GM12878 (cell line): ENCODE measurements at regions of chr12 and their contacts with region 1.

Region 1: DNA sequence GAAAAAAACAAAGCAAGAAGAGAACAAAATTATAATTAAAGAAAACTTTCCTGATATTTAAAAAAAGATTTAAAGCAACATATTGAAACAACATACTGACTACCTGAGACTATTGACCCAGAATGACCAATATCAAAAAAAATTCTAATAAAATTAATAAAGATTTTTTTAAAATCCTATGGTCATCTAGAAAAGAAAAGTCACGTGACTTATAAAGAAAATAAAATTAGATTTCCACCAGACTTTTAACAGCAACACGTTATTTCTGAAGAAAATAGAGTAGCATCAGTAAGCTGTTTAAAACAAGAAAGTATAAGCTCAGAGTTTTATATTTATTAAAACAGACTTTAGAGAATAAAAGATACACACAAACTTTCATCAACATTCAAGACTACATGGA is 238.0 kb downstream of the C12orf42 start:
- DNase-seq: no peak
- ATAC-seq: no peak
- H3K4me3 ChIP-seq: no peak overlapping the region
- H3K27ac ChIP-seq: no peak overlapping the region
- H3K4me1 ChIP-seq: no peaks in the 10 kb centered on the region
- H3K27me3 ChIP-seq: no peaks in the 10 kb centered on the region
- CTCF ChIP-seq: no peak
- EP300 ChIP-seq: no peak
- POLR2A ChIP-seq: no peak
- RAD21 ChIP-seq: no peak

Region 2: GRCh38 chr12:102691773-102692555 is 565.8 kb before region 1 on chr12:
- CTCF ChIA-PET with region 1: no interaction called
- POLR2A ChIA-PET with region 1: interaction called, 10 read pairs
- RAD21 ChIA-PET with region 1: no interaction called
- SMC1A ChIA-PET with region 1: no interaction called
- in situ Hi-C with region 1: no loop called
- intact Hi-C with region 1: no loop called
- DNase-seq: no peak
- ATAC-seq: no peak
- H3K4me3 ChIP-seq: no peak overlapping the region
- H3K27ac ChIP-seq: no peak overlapping the region
- H3K4me1 ChIP-seq: no peaks in the 10 kb centered on the region
- H3K27me3 ChIP-seq: no peaks in the 10 kb centered on the region
- CTCF ChIP-seq: no peak
- EP300 ChIP-seq: no peak
- POLR2A ChIP-seq: no peak
- RAD21 ChIP-seq: no peak

Region 3: DNA sequence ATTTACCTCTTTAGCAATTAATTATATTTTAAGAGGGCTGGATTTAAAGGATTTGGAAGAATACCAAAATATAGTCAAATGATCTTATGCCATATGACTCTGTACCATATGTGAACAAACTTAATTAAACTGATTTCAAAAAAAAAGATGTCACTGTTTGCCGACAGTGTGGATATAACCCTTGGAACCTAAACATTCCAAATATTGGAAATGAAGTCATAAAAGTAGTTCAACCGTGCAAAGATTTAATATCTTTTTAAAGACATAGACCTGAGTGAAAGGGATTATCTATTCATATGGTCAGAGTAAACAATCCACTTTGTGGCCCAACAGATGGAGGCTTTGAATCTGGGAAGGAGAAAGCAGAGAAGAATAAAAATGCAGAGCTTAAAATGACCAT is 11.4 kb before region 1 on chr12:
- CTCF ChIA-PET with region 1: interaction called, 3 read pairs
- POLR2A ChIA-PET with region 1: no interaction called
- RAD21 ChIA-PET with region 1: no interaction called
- SMC1A ChIA-PET with region 1: interaction called, 12 read pairs
- in situ Hi-C with region 1: no loop called
- intact Hi-C with region 1: no loop called
- DNase-seq: no peak
- ATAC-seq: no peak
- H3K4me3 ChIP-seq: no peak overlapping the region
- H3K27ac ChIP-seq: no peak overlapping the region
- H3K4me1 ChIP-seq: no peaks in the 10 kb centered on the region
- H3K27me3 ChIP-seq: no peaks in the 10 kb centered on the region
- CTCF ChIP-seq: no peak
- EP300 ChIP-seq: no peak
- POLR2A ChIP-seq: no peak
- RAD21 ChIP-seq: no peak